ENCODE measurements at regions of chr7 and their contacts with region 1.

Region 1: GRCh38 chr7:119935418-119936025 is 337.5 kb upstream of the KCND2 start:
- DNase-seq: peak; percentile 51
- H3K4me3 ChIP-seq: no peak overlapping the region
- H3K27ac ChIP-seq: no peak overlapping the region
- H3K4me1 ChIP-seq: no peaks in the 10 kb centered on the region
- H3K27me3 ChIP-seq: no peaks in the 10 kb centered on the region
- CTCF ChIP-seq: peak; percentile 17 to 21
- POLR2A ChIP-seq: no peak

Region 2: GRCh38 chr7:119545118-119545517 is 390.4 kb before region 1 on chr7:
- CTCF ChIA-PET with region 1: interaction called, 10 read pairs
- POLR2A ChIA-PET with region 1: no interaction called
- dilution Hi-C with region 1: no loop called
- intact Hi-C with region 1: no loop called
- DNase-seq: peak; percentile 81
- H3K4me3 ChIP-seq: no peak overlapping the region
- H3K27ac ChIP-seq: peak overlapping the region; percentile 65
- H3K4me1 ChIP-seq: peaks cover 15% of the 10 kb centered on the region
- H3K27me3 ChIP-seq: no peaks in the 10 kb centered on the region
- CTCF ChIP-seq: no peak
- POLR2A ChIP-seq: no peak

Region 3: DNA sequence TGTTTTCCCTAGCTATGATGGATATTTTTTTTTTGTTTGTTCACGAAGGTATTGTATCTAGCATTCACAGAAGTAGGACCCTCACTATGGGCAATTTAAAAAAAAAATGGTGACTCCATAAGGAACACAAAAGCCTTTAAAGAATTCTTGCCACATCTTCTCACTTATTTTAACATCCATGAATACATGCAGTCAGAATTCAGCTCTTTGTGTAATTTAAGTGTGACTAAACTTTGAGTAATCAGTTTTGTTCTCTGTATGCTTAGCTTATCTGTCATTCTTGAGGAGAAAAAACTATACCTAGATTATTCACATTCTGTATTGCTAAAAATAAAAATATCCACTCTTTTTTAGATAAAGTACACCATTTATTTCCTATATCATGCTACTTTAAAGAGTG is 24.3 kb after region 1 on chr7:
- CTCF ChIA-PET with region 1: interaction called, 22 read pairs
- POLR2A ChIA-PET with region 1: no interaction called
- dilution Hi-C with region 1: no loop called
- intact Hi-C with region 1: no loop called
- DNase-seq: no peak
- H3K4me3 ChIP-seq: no peak overlapping the region
- H3K27ac ChIP-seq: no peak overlapping the region
- H3K4me1 ChIP-seq: peaks cover 2% of the 10 kb centered on the region
- H3K27me3 ChIP-seq: no peaks in the 10 kb centered on the region
- CTCF ChIP-seq: no peak
- POLR2A ChIP-seq: no peak

Region 4: GRCh38 chr7:120272261-120272660 is 336.7 kb after region 1 on chr7:
- CTCF ChIA-PET with region 1: interaction called, 22 read pairs
- POLR2A ChIA-PET with region 1: no interaction called
- dilution Hi-C with region 1: no loop called
- intact Hi-C with region 1: loop called (anchors 1 kb)
- DNase-seq: peak; percentile 49
- H3K4me3 ChIP-seq: peak overlapping the region; percentile 33 to 82 (median 59)
- H3K27ac ChIP-seq: no peak overlapping the region
- H3K4me1 ChIP-seq: peaks cover 11% of the 10 kb centered on the region
- H3K27me3 ChIP-seq: peaks cover 14 to 19% of the 10 kb centered on the region in 2 experiments
- CTCF ChIP-seq: peak; percentile 66 to 71
- POLR2A ChIP-seq: no peak

Region 5: GRCh38 chr7:120725376-120726039 is 790.0 kb after region 1 on chr7:
- CTCF ChIA-PET with region 1: interaction called, 71 read pairs
- POLR2A ChIA-PET with region 1: no interaction called
- dilution Hi-C with region 1: no loop called
- intact Hi-C with region 1: loop called (anchors 1 kb)
- DNase-seq: peak; percentile 48
- H3K4me3 ChIP-seq: no peak overlapping the region
- H3K27ac ChIP-seq: no peak overlapping the region
- H3K4me1 ChIP-seq: peaks cover 2% of the 10 kb centered on the region
- H3K27me3 ChIP-seq: peaks cover 2 to 3% of the 10 kb centered on the region in 2 experiments
- CTCF ChIP-seq: peak; percentile 37 to 39
- POLR2A ChIP-seq: no peak